Activated CD4-positive, alpha-beta T cell treated with anti-CD3 and anti-CD28 coated beads for 36 hours (primary cell): ENCODE measurements at regions of chr2 and their contacts with region 1.

Region 1: DNA sequence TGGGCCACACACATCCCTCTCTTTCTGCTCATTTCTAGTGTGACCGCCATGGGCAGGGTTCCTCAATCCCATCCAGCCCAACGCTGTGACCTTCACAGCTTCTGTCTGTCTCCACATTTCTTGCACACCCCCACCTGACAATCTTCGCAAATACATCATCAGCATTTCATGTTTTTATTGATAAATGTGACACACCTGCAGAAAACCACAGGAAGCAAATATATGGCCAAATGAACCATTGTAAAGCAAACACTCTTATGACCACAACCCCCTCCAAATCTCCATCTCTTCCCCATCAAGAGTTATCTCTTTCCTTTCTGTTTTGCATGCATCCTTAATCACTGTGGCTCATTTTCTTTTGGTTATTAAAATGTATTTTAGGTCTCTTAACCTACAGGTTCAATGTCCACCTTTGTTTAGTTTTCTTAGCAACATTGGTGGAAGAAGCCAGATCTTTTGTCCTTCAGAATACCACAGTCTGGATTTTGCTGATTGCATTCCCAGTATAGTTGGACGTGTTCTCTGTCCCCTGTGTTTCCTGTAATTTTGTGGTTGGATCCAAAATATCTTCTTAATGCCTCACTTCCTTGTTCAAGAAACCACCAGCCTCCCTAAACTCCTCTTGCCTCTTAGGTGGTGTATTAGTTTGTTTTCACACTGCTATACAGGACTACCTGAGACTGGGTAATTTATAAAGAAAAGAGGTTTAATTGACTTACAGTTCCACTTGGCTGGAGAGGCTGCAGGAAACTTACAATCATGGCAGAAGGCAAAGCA is 9.8 kb upstream of the NCK2 start:
- DNase-seq: no peak
- ATAC-seq: no peak
- H3K4me3 Mint-ChIP-seq: no peak overlapping the region
- H3K27ac Mint-ChIP-seq: no peak overlapping the region
- H3K4me1 Mint-ChIP-seq: peaks cover 52% of the 10 kb centered on the region
- H3K27me3 Mint-ChIP-seq: no peaks in the 10 kb centered on the region

Region 2: DNA sequence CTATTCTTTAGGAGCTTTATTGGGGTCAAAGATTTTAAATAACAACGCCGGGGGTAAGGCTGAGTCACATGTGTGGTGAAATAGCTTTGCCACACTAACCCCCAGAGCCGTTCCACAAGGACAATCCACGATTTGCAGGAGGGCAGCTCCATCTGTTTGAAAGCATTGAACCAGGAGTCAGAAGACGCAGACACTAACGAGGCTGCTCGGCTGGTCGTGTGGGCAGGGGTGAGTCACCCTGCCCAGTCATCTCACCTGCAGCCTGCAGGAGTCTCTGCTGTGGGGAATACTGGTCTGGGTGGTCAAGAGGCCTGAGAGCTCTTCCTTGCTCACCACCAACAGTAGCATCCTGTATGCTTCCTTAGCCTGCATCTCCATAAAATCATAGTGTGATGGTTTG is 139.4 kb before region 1 on chr2:
- CTCF ChIA-PET with region 1: no interaction called
- POLR2A ChIA-PET with region 1: no interaction called
- intact Hi-C with region 1: loop called in 1 of 2 experiments (anchors 5 kb)
- DNase-seq: peak; percentile 54
- ATAC-seq: peak; percentile 73
- H3K4me3 Mint-ChIP-seq: no peak overlapping the region
- H3K27ac Mint-ChIP-seq: no peak overlapping the region
- H3K4me1 Mint-ChIP-seq: peaks cover 30% of the 10 kb centered on the region
- H3K27me3 Mint-ChIP-seq: no peaks in the 10 kb centered on the region

Region 3: GRCh38 chr2:105652014-105652796 is 82.7 kb before region 1 on chr2:
- CTCF ChIA-PET with region 1: no interaction called
- POLR2A ChIA-PET with region 1: no interaction called
- intact Hi-C with region 1: loop called in 1 of 2 experiments (anchors 5 kb)
- DNase-seq: no peak
- ATAC-seq: no peak
- H3K4me3 Mint-ChIP-seq: no peak overlapping the region
- H3K27ac Mint-ChIP-seq: no peak overlapping the region
- H3K4me1 Mint-ChIP-seq: peaks cover 11% of the 10 kb centered on the region
- H3K27me3 Mint-ChIP-seq: no peaks in the 10 kb centered on the region

Region 4: DNA sequence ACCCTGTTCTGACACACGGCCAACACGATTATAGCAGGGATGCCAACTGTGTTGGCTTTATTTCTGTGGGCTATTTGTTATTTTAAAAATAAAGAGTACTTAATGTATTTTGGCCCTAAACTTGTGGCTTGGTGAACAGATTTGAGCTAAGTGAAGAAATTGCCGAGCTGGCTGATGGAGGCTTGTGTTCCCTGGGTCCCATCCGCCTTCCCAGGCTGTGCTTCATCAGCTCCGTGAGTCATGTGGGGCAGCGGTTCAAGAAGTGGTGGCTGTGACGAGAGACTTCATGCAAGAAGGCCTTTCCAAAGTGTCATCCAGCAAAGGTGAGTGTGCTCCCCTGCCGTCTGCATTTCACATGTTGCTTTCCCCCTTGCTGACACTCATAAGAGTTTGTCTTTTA is 63.8 kb before region 1 on chr2:
- CTCF ChIA-PET with region 1: no interaction called
- POLR2A ChIA-PET with region 1: no interaction called
- intact Hi-C with region 1: loop called (anchors 5 to 10 kb)
- DNase-seq: no peak
- ATAC-seq: no peak
- H3K4me3 Mint-ChIP-seq: no peak overlapping the region
- H3K27ac Mint-ChIP-seq: no peak overlapping the region
- H3K4me1 Mint-ChIP-seq: peaks cover 19% of the 10 kb centered on the region
- H3K27me3 Mint-ChIP-seq: no peaks in the 10 kb centered on the region

Region 5: DNA sequence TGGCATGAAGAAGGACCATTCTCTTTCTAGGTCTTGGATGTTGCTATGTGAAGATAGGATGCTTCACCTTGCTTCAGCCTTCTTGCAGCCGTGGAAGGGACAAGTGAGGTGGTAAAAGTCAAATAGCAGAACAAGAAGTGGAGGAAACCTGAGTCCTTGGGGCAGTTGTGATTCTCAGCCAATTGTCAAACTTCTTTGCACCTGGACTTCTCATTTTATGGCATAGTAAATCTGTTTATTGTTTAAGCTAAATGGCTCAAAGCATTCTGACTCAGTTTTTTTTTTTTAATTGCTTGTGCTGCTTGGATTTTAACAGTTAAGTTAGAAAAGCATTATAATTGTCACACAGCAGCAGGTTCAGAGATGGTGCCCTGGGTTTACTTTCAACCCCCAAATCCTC is 1184.1 kb after region 1 on chr2:
- CTCF ChIA-PET with region 1: no interaction called
- POLR2A ChIA-PET with region 1: no interaction called
- intact Hi-C with region 1: no loop called
- DNase-seq: no peak
- ATAC-seq: no peak
- H3K4me3 Mint-ChIP-seq: no peak overlapping the region
- H3K27ac Mint-ChIP-seq: no peak overlapping the region
- H3K4me1 Mint-ChIP-seq: no peaks in the 10 kb centered on the region
- H3K27me3 Mint-ChIP-seq: no peaks in the 10 kb centered on the region